Activated naive CD4-positive, alpha-beta T cell treated with anti-CD3 and anti-CD28 coated beads for 36 hours (primary cell): ENCODE measurements at regions of chr15 and their contacts with region 1.

Region 1: DNA sequence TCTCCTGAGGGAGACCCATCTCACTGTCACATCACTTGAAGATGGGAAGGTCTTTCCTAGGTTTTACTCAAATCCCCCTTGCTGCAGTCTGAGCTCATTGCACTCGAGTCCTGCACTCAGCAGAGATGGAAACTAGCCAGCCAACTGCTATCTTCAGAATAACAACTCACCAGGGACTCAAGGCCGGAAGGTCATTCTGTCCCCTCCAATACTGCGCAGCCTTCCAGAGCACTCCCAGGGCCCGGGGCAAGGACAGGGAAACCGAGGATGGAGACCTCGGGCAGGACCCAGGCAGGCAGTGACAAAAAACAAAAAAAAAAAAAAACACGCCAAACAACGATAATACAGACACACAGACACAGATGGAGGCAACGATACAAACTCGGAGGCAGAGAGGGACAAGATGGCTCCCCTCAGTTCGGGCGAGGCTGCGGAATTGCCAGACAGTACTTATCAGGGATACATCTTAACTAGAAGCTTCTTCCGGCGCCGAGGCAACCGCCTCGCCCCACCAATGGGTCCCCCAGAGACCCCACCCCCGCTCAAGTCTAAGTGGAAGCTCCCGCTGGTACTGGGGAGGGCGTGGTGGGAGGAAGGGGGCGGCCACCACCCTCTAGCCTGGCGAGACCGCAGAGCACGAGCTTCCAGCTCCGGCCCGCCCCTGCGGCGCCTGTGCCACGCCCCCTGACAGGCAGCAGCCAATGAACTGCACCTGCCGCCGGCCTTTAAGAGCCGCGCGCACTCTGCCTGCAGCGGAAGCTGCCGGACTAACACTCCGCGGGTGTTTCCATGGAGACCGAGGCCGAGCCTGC is 7.0 kb upstream of the MAP1A start:
- DNase-seq: peak; percentile 96
- H3K4me3 Mint-ChIP-seq: peak overlapping the region; percentile 85
- H3K27ac Mint-ChIP-seq: peak overlapping the region; percentile 24
- H3K4me1 Mint-ChIP-seq: peaks cover 22% of the 10 kb centered on the region
- H3K27me3 Mint-ChIP-seq: peaks cover under 1% of the 10 kb centered on the region

Region 2: GRCh38 chr15:43329960-43330779 is 180.2 kb before region 1 on chr15 and contains the start of gene LCMT2:
- CTCF ChIA-PET with region 1: no interaction called
- intact Hi-C with region 1: loop called (anchors 1 kb)
- DNase-seq: peak; percentile 93
- H3K4me3 Mint-ChIP-seq: peak within 1 kb of the TSS; percentile 95
- H3K27ac Mint-ChIP-seq: peak within 1 kb of the TSS; percentile 97
- H3K4me1 Mint-ChIP-seq: peaks cover 28% of the 10 kb centered on the region
- H3K27me3 Mint-ChIP-seq: no peaks in the 10 kb centered on the region
- total RNA-seq, gene LCMT2: 4.2 to 4.3 TPM

Region 3: GRCh38 chr15:43440721-43441281 is 69.6 kb before region 1 on chr15:
- CTCF ChIA-PET with region 1: interaction called, 23 read pairs
- intact Hi-C with region 1: loop called (anchors 1 kb)
- DNase-seq: peak; percentile 68
- H3K4me3 Mint-ChIP-seq: no peak overlapping the region
- H3K27ac Mint-ChIP-seq: peak overlapping the region; percentile 86
- H3K4me1 Mint-ChIP-seq: peaks cover 7% of the 10 kb centered on the region
- H3K27me3 Mint-ChIP-seq: no peaks in the 10 kb centered on the region

Region 4: DNA sequence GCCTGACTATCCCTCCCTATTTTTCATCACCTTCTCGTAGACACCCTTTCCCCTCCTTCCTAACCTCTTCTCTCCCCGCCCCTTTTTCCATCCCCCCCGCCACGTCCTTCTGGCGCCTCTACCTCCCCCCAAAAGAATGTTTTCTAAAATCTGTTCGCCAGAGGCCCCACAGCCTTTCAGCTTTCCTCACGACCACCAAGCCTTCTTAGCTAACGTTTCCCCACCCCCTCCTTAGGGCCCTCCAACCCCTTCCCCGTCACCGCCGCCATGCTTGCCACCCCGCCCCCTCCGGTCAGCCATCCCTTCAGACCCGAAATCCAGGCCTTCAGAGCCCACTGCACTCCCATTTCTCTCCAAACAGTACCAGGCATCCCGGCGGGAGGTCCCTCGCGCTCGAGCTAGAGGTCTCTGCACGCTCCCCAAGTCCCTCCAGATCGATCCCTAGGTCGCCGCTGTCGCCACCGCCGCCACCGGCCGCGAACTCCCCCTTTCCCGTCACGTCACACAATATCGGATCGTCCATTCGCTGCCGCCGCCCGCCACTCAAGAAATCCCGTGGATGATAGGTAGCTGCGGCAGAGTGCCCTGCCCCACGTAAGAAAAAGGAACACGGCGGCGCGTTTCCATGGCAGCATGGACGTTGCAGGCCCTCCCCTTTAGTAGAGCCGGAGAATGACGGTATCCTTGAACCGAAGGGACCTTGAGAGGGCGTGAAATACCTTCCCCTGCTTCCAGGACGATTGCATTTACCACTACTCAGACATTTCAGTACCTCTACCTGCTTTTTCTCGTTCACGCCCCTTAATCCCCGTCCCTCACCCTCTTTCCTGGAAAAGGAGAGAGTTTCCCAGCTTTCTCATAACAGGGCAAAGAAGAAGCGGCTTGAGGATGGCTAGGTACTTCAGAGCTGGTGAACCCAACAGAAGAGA is 17.5 kb before region 1 on chr15 and contains the start of gene TP53BP1:
- CTCF ChIA-PET with region 1: interaction called, 15 read pairs
- intact Hi-C with region 1: loop called (anchors 1 kb)
- DNase-seq: peak; percentile 97
- H3K4me3 Mint-ChIP-seq: peak within 1 kb of the TSS; percentile 96
- H3K27ac Mint-ChIP-seq: peak within 1 kb of the TSS; percentile 92
- H3K4me1 Mint-ChIP-seq: peaks cover 27% of the 10 kb centered on the region
- H3K27me3 Mint-ChIP-seq: no peaks in the 10 kb centered on the region
- total RNA-seq, gene TP53BP1: 18.9 to 22.3 TPM

Region 5: GRCh38 chr15:43625106-43625505 is 114.7 kb after region 1 on chr15:
- CTCF ChIA-PET with region 1: no interaction called
- intact Hi-C with region 1: no loop called
- DNase-seq: no peak
- H3K4me3 Mint-ChIP-seq: no peak overlapping the region
- H3K27ac Mint-ChIP-seq: no peak overlapping the region
- H3K4me1 Mint-ChIP-seq: no peaks in the 10 kb centered on the region
- H3K27me3 Mint-ChIP-seq: peaks cover 1% of the 10 kb centered on the region